ENCODE measurements at regions of chr1 and their contacts with region 1.

Region 1: GRCh38 chr1:35451125-35451528 is 106.1 kb downstream of the KIAA0319L start:
- DNase-seq: peak; percentile 84
- ATAC-seq: peak; percentile 95
- H3K4me3 Mint-ChIP-seq: no peak overlapping the region
- H3K27ac Mint-ChIP-seq: no peak overlapping the region
- H3K4me1 Mint-ChIP-seq: peaks cover 23% of the 10 kb centered on the region
- H3K27me3 Mint-ChIP-seq: no peaks in the 10 kb centered on the region

Region 2: GRCh38 chr1:35505908-35506798 is 55.0 kb after region 1 on chr1:
- CTCF ChIA-PET with region 1: interaction called, 47 read pairs
- POLR2A ChIA-PET with region 1: interaction called, 10 read pairs
- DNase-seq: peak; percentile 78
- ATAC-seq: peak; percentile 92
- H3K4me3 Mint-ChIP-seq: peak overlapping the region; percentile 59
- H3K27ac Mint-ChIP-seq: peak overlapping the region; percentile 84
- H3K4me1 Mint-ChIP-seq: peaks cover 56% of the 10 kb centered on the region
- H3K27me3 Mint-ChIP-seq: no peaks in the 10 kb centered on the region

Region 3: DNA sequence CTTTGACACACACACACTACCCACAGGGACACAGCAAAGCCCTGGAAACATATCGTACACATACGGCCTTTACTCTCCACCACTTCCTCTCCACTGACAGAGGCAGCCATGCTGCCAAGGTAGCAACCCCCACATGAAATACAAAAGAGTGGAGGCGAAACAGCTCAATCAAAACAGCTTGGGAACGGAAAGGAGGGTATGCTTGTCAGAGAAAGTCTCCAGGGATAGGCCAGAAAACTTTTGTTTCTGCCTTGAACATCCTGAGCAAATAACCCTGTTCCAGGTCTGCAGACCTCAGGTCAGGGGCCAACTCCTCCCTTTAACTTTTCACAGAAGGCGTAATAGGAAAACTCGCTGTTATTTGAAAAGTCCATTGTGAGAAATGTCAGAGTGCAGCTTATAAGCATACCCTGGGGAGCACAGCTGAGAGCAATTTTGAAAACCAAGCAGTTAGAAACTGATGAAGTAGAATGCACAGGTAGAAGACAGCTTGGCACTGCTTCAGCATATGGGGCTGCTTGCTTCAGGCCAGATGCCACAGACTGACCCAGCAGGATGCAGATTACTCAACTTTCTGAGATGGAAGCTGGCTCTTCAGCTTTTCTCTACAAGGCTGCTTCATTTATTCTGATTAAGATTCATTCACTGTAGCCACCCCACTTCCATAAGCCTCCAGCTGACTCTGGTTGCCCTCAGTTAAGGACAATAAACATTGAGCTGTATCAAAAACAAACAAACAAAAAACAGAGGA is 88.1 kb after region 1 on chr1:
- CTCF ChIA-PET with region 1: interaction called, 215 read pairs
- POLR2A ChIA-PET with region 1: interaction called, 4 read pairs
- DNase-seq: peak; percentile 71
- ATAC-seq: peak; percentile 95
- H3K4me3 Mint-ChIP-seq: peak overlapping the region; percentile 64
- H3K27ac Mint-ChIP-seq: peak overlapping the region; percentile 94
- H3K4me1 Mint-ChIP-seq: peaks cover 49% of the 10 kb centered on the region
- H3K27me3 Mint-ChIP-seq: no peaks in the 10 kb centered on the region

Region 4: DNA sequence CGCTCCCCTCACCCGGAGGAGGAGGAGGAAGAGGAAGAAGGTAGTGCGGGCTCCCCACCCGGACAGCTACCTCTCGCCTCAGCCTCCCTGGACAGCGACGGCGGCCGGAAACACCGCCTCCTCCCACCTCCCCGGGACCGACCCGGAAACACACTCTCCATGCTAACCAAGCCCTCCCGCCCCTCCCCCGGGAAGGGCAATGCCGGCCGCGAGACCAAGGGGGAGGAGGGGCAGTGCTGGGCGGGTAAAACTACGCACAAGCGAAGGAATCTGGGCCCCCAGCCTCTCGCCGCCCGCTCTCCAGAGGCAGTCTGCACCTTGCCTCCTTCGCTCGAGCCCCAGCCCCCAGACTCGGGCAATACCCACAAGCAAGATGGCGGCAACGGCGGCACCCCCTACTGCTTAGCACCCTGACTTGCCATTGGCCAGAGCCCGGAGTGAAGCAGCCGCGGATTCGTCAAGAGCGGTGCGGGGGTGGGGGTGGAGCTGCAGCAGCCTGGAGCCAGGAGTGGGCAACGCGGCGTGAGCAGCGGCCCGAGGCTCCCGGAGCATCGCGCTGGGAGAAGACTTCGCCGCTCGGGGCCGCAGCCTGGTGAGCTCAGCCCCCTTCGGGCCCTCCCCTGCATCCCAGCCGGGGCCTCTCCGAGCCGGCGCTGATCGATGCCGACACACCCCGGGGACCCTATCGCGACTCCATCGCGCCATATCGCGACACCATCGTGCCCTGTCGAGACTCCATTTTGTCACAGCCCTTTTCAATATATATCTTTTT is 106.4 kb after region 1 on chr1 and contains the starts of genes KIAA0319L and NCDN:
- CTCF ChIA-PET with region 1: interaction called, 60 read pairs
- POLR2A ChIA-PET with region 1: interaction called, 20 read pairs
- DNase-seq: peak; percentile 98
- ATAC-seq: peak; percentile 95
- H3K4me3 Mint-ChIP-seq: peak within 1 kb of the TSS; percentile 96
- H3K27ac Mint-ChIP-seq: peak within 1 kb of the TSS; percentile 98
- H3K4me1 Mint-ChIP-seq: peaks cover 46% of the 10 kb centered on the region
- H3K27me3 Mint-ChIP-seq: no peaks in the 10 kb centered on the region
- total RNA-seq, gene KIAA0319L: 27.0 to 36.1 TPM
- total RNA-seq, gene NCDN: 19.3 to 19.4 TPM

Region 5: DNA sequence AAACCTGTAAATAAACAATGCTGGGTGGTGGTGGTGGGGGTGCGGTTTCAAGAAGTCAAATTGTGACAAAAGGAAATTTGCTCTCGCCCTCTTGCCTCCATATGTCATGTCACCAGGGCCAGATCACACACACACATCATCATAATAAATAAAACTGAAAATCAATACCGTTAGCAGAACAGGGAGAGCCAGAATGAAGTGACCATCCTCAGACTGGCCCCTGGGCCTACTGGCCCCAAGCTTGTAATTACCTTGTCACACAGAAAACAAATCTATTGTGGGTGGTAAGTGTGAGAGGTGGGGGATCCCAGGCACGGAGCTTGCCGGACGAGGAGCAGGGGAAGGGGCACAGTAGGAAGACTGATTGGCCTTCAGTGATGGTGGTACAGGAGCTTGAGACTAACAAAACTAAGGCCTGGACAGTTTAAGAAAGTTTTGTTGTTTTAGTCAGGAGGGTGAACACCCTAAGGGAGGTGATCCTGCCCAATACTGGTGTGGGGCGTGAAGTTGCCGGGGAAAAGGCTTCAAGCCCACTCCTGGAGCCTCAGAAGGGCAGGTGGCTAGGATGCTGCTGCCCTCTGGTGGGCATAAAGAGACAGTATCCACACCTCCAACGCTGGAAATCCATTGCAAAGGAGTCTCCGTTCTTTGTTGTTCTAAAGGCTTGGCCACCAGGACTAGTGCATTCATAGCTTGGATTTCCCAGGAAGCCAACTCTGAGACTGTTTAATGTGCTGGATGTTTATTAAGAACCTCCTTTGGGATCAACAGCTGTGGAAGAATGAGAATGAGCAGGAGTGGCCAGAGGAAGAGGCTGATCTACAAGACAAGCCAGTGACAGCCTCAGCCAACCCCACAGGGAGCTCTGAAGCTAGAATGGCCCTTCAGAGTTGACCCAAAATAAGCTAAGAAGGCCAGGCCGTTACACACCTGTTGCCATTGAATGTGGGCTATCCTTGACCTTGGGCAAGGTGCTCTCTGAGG is 275.6 kb after region 1 on chr1:
- CTCF ChIA-PET with region 1: interaction called, 22 read pairs
- POLR2A ChIA-PET with region 1: no interaction called
- DNase-seq: peak; percentile 62
- ATAC-seq: peak; percentile 87
- H3K4me3 Mint-ChIP-seq: no peak overlapping the region
- H3K27ac Mint-ChIP-seq: no peak overlapping the region
- H3K4me1 Mint-ChIP-seq: peaks cover 3% of the 10 kb centered on the region
- H3K27me3 Mint-ChIP-seq: no peaks in the 10 kb centered on the region

Measured in activated CD8-positive, alpha-beta T cell treated with anti-CD3 and anti-CD28 coated beads, Interleukin-2, amount 10 ng/mL, durations not matched to agents 7 days and 5 days (primary cell).